ENCODE measurements at regions of chr2 and their contacts with region 1.

Region 1: DNA sequence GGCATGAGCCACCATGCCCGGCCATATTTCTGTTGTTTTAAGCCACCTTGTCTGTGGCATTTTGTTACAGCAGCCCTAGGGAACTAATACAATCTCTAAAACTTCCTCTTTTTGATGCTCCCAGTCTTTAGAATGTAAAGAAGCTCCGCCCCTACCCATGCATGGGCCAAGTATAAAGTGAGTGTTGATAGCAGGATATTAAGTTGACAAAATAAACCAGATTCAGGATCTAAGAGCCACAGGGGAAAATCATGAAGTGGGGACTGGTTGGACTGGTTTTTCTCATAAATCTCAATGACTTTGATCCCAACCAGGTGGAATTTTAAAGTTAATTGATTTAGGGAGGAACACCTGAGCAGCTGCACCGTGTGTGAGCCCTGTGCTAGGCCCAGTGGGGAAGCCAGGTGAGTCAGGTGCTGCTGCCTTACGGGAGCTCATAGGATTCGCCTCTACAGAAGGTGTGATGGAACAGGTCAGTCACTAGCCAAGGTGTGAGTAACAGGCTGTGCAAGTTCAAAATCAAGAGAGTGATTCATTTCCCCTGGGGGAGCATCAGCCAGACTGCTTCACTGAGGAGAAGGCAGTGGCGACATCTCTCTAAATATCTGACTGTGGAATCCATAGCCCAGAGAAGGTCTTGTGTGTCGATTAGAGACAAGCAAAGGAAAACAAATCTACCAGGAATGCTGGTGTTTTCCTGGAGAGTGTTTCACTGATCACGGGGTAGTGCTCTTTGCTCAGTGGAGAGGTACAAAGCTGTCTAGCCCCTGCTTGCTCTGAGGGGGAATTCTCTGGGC is 63.0 kb upstream of the MSH2 start:
- DNase-seq: no peak
- H3K4me3 ChIP-seq: no peak overlapping the region
- H3K27ac ChIP-seq: no peak overlapping the region
- H3K4me1 ChIP-seq: peaks cover 0 to 19% of the 10 kb centered on the region in 2 donors
- H3K27me3 ChIP-seq: no peaks in the 10 kb centered on the region
- CTCF ChIP-seq: no peak
- POLR2A ChIP-seq: no peak

Region 2: GRCh38 chr2:47386551-47386950 is 46.6 kb after region 1 on chr2:
- intact Hi-C with region 1: loop called (anchors 2 kb)
- DNase-seq: no peak
- H3K4me3 ChIP-seq: no peak overlapping the region
- H3K27ac ChIP-seq: no peak overlapping the region
- H3K4me1 ChIP-seq: no peaks in the 10 kb centered on the region
- H3K27me3 ChIP-seq: no peaks in the 10 kb centered on the region
- CTCF ChIP-seq: no peak
- POLR2A ChIP-seq: no peak

Region 3: GRCh38 chr2:47437287-47437686 is 97.3 kb after region 1 on chr2:
- intact Hi-C with region 1: no loop called
- DNase-seq: peak in 2 of 7 donors; percentile 18 to 27
- H3K4me3 ChIP-seq: no peak overlapping the region
- H3K27ac ChIP-seq: no peak overlapping the region
- H3K4me1 ChIP-seq: no peaks in the 10 kb centered on the region
- H3K27me3 ChIP-seq: no peaks in the 10 kb centered on the region
- CTCF ChIP-seq: peak; percentile 32 to 75 (median 50)
- POLR2A ChIP-seq: no peak

Region 4: GRCh38 chr2:47767880-47768609 is 428.1 kb after region 1 on chr2:
- intact Hi-C with region 1: loop called in 1 of 2 experiments (anchors 10 kb)
- DNase-seq: peak; percentile 42 to 82 (median 67)
- H3K4me3 ChIP-seq: no peak overlapping the region
- H3K27ac ChIP-seq: no peak overlapping the region
- H3K4me1 ChIP-seq: peaks cover 0 to 7% of the 10 kb centered on the region in 2 donors
- H3K27me3 ChIP-seq: no peaks in the 10 kb centered on the region
- CTCF ChIP-seq: peak; percentile 92 to 100 (median 97)
- POLR2A ChIP-seq: no peak

Measured in adrenal gland (tissue), 19 donors.